RWPE1 (cell line): ENCODE measurements at regions of chr10 and their contacts with region 1.

Region 1: GRCh38 chr10:29304264-29305030 is 15.6 kb downstream of the LYZL1 start:
- DNase-seq: peak; percentile 76
- H3K27ac ChIP-seq: no peak overlapping the region
- CTCF ChIP-seq: peak; percentile 72

Region 2: GRCh38 chr10:28663576-28664313 is 640.7 kb before region 1 on chr10:
- CTCF ChIA-PET with region 1: interaction called, 18 read pairs
- POLR2A ChIA-PET with region 1: no interaction called
- DNase-seq: peak; percentile 77
- H3K27ac ChIP-seq: no peak overlapping the region
- CTCF ChIP-seq: peak; percentile 95

Region 3: DNA sequence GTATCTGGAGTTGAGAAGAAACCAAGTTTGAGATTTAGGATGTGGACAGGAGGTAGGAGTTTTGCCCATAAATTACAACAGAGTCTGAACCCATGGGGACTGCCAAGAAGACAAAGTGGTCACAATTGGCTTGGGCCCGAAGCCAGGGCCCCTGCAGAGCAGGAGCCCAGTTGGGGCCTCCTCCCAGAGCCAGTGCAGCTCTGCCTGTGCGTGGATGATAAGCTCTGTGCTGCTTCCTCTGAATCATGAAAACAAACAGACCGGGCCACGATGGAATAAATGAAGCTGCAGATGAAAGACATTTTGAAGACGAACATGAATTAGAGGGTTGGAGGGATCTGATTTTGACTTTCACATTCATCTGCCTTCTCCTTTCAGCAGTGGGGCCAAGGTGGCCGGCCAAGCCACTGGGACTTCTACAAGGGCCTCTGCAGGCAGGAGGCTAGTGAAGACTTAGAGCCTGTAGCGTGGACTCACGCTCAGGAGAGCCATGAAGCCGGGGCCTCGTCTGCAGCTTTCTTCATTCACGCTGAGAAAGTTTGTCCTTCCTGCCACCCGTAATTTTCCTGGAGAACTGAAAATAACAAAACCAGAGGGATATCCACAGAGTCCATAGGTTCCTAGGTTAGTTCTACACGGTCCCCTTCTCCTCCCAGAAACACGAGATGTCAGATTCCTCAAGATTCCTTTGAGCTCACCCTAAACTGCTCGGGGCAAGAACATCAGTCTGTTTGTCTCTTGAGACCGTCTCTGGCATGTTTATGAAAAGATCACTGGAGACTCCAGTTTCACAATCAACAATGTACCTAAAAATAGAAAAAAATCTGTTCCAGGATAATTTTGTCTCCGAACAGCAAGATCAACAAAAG is 172.3 kb before region 1 on chr10:
- CTCF ChIA-PET with region 1: interaction called, 13 read pairs
- POLR2A ChIA-PET with region 1: no interaction called
- DNase-seq: no peak
- H3K27ac ChIP-seq: no peak overlapping the region
- CTCF ChIP-seq: no peak

Region 4: GRCh38 chr10:29646238-29646902 is 341.9 kb after region 1 on chr10:
- CTCF ChIA-PET with region 1: no interaction called
- POLR2A ChIA-PET with region 1: no interaction called
- DNase-seq: peak; percentile 69
- H3K27ac ChIP-seq: peak overlapping the region; percentile 77
- CTCF ChIP-seq: no peak